Activated T-helper 2 cell treated with anti-CD3 and anti-CD28 coated beads, Interferon-gamma antibody, Interleukin-2, Interleukin-4, amounts not matched to agents 10 μg/mL and 5 μg/mL and 100 μg/mL, durations not matched to agents 14 hours and 24 hours and 36 hours (primary cell): ENCODE measurements at regions of chr6 and their contacts with region 1.

Region 1: DNA sequence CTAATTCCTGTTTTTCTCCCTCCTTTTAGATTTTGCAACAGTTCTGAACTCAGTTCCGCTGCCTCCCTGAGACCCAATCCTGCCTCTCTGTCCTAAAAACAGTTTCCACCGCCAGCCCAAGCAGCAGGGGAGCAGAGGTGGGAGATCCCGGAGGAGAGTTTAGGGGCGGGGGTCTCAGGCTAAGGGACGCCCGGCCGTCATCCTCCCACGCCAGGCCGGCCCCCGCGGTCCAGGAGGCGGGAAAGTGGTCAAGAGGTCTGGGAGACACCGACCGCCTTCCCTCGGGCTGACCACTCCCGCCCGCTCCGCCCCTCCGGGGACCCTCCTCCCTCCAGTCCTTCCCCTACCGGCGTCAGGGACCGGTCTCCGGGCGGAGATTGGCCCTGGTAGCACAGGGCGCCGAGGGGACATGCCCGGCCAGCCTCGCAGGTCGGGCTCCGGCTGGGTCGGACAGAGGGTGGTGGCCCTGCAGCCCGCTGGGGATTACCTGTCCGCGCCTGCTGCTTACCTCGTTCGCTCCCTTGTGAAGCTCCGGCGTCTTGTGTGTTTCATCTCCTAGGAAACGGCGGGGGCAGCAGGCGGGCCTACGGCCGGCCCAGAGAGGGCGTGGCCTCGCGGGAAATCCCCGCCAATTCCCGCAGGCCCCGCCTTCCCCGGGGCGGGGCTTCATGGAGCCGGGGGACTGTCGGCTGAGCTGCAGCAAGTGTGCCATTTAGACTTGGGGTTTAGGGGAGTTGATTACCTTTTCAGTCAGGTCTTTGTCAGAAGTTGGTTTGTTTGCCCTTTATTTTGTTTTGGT is at the start of gene MAK:
- DNase-seq: peak; percentile 86
- H3K4me3 Mint-ChIP-seq: peak within 1 kb of the TSS; percentile 77
- H3K27ac Mint-ChIP-seq: peak within 1 kb of the TSS; percentile 98
- H3K4me1 Mint-ChIP-seq: peaks cover 21% of the 10 kb centered on the region
- H3K27me3 Mint-ChIP-seq: peaks cover 25% of the 10 kb centered on the region
- total RNA-seq, gene MAK: 0.41 and 0.71 TPM in 2 replicates

Region 2: DNA sequence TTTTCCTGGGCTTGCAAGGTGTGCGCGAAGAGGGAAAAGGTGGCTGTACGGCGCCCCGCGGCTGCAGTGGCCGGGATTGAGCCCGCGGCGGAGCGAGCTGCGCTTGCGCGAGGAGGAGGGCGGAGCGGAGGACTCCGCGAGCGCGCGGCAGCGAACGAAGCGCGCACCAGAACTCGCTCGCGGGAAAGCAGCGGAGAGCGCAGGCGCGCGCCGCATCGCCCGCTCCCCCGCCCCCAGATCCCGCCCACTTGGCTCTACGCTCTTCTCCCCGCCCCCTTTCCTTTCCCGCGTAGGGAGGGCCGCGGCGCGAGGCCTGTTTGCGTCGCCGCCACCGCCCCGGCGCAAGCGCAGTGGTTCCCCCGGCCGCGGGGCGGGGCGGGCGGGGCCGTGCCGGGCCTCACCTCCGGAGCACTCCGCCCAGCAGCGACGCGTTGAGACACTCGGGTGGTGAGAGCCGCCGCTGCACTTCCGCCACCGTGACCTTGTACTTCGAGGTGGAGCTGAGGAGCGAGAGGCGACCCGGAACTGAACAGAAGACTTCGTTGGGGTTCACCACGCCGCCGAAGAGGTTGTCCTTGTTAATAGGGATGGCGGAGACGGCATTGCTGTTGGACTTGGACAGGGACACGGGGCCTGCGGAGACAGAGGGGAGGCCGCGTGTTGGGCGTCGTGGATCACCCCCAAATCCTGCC is 433.9 kb before region 1 on chr6:
- intact Hi-C with region 1: loop called (anchors 2 kb)
- DNase-seq: peak; percentile 90
- H3K4me3 Mint-ChIP-seq: peak overlapping the region; percentile 73
- H3K27ac Mint-ChIP-seq: peak overlapping the region; percentile 75
- H3K4me1 Mint-ChIP-seq: peaks cover 8% of the 10 kb centered on the region
- H3K27me3 Mint-ChIP-seq: peaks cover 73% of the 10 kb centered on the region

Region 3: DNA sequence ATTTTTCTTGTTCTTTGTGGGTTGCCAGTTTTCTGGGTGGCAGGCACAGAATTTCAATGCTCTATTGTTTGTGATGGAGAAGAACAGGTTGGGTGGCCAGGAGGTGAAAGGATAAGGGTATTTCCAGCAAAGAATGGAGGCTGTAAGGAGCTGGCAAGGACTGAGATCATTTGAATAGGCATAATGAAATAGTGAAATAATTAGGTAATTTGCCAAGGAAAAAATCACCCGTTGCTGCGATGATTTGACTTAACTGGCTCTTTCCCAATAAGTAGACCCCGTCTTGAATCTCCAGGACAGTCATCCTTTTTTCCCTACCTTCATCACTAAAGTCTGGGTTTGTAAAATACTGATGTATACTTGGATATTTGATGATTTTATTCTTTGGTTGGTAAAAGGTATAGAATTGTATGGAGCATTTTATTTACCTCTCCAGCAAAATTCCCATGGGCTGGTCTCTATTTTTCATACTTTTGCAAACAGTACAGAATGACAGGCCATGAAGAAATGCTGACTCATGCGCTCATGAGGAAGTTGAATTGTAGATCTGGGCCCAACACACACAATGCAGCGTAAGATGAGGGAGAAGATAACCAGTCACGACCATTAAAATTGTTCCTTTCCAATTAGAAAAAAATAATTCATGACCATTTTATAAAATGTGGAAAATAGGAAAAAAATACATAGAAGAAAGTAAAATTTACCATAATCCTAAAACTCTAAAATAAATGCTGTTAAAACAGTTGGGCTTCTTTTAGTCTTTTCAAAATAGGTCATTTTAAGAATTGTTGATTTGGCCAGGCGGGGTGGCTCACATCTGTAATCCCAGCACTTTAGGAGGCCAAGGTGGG is 319.4 kb before region 1 on chr6:
- intact Hi-C with region 1: no loop called
- DNase-seq: no peak
- H3K4me3 Mint-ChIP-seq: no peak overlapping the region
- H3K27ac Mint-ChIP-seq: no peak overlapping the region
- H3K4me1 Mint-ChIP-seq: peaks cover 8% of the 10 kb centered on the region
- H3K27me3 Mint-ChIP-seq: no peaks in the 10 kb centered on the region

Region 4: GRCh38 chr6:10569392-10570127 is 268.6 kb before region 1 on chr6:
- intact Hi-C with region 1: no loop called
- DNase-seq: no peak
- H3K4me3 Mint-ChIP-seq: no peak overlapping the region
- H3K27ac Mint-ChIP-seq: no peak overlapping the region
- H3K4me1 Mint-ChIP-seq: no peaks in the 10 kb centered on the region
- H3K27me3 Mint-ChIP-seq: no peaks in the 10 kb centered on the region

Region 5: GRCh38 chr6:10694302-10695085 is 143.7 kb before region 1 on chr6 and contains the starts of genes C6orf52 and PAK1IP1:
- intact Hi-C with region 1: loop called (anchors 5 kb)
- DNase-seq: peak; percentile 92
- H3K4me3 Mint-ChIP-seq: peak within 1 kb of the TSS; percentile 99
- H3K27ac Mint-ChIP-seq: peak within 1 kb of the TSS; percentile 100
- H3K4me1 Mint-ChIP-seq: peaks cover 21% of the 10 kb centered on the region
- H3K27me3 Mint-ChIP-seq: no peaks in the 10 kb centered on the region
- total RNA-seq, gene C6orf52: 1.7 and 2.4 TPM in 2 replicates
- total RNA-seq, gene PAK1IP1: 27.9 and 28.8 TPM in 2 replicates

Region 6: DNA sequence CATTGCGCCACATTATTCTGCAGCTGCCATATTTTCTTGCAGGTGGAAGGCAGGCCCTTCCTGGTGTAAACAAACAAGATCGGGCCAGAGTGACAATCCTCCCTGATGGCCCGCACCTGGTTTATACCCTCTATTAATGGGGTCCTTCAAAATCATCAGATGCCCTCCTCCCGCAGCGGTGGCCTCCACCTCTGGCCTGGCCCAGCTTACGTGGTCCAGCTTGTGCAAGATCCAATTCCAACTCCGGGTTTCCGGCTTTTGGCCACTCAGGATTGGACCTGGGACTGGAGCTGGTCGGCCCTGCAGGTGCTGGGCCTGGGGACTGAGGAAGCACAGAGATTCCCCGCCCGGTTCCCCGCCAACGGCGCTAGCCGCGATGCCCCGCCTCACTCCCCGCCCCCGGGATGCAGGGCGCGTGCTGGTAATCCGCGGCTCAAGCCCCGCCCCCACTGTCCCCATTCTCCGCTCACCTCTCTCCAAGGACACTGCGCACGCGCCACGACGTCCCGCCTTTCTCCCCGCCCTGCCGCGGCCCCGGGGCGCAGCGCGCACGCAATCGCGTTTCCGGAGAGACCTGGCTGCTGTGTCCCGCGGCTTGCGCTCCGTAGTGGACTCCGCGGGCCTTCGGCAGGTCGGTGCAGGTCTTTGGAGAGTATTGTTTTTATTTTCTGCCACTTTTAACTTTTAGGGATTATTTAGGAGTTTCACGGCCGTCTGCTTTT is 90.8 kb before region 1 on chr6 and contains the start of gene TMEM14B:
- intact Hi-C with region 1: loop called (anchors 2 kb)
- DNase-seq: peak; percentile 99
- H3K4me3 Mint-ChIP-seq: peak within 1 kb of the TSS; percentile 95
- H3K27ac Mint-ChIP-seq: peak within 1 kb of the TSS; percentile 94
- H3K4me1 Mint-ChIP-seq: peaks cover 37% of the 10 kb centered on the region
- H3K27me3 Mint-ChIP-seq: no peaks in the 10 kb centered on the region
- total RNA-seq, gene TMEM14B: 85.3 and 94.0 TPM in 2 replicates

Region 7: GRCh38 chr6:11093589-11094410 is 255.6 kb after region 1 on chr6 and contains the start of gene SMIM13:
- intact Hi-C with region 1: loop called (anchors 5 kb)
- DNase-seq: peak; percentile 92
- H3K4me3 Mint-ChIP-seq: peak within 1 kb of the TSS; percentile 96
- H3K27ac Mint-ChIP-seq: peak within 1 kb of the TSS; percentile 98
- H3K4me1 Mint-ChIP-seq: peaks cover 22% of the 10 kb centered on the region
- H3K27me3 Mint-ChIP-seq: peaks cover 2% of the 10 kb centered on the region
- total RNA-seq, gene SMIM13: 12.2 and 12.3 TPM in 2 replicates